Activated T-helper 1 cell treated with anti-CD3 and anti-CD28 coated beads, Interleukin-12 subunit alpha, Interleukin-12 subunit beta, Interleukin-2, Interleukin-4 antibody, amounts not matched to agents 30 ng/mL and 10 ng/mL and 1 ng/mL, durations not matched to agents 14 hours and 24 hours and 36 hours (primary cell): ENCODE measurements at regions of chr1 and their contacts with region 1.

Region 1: DNA sequence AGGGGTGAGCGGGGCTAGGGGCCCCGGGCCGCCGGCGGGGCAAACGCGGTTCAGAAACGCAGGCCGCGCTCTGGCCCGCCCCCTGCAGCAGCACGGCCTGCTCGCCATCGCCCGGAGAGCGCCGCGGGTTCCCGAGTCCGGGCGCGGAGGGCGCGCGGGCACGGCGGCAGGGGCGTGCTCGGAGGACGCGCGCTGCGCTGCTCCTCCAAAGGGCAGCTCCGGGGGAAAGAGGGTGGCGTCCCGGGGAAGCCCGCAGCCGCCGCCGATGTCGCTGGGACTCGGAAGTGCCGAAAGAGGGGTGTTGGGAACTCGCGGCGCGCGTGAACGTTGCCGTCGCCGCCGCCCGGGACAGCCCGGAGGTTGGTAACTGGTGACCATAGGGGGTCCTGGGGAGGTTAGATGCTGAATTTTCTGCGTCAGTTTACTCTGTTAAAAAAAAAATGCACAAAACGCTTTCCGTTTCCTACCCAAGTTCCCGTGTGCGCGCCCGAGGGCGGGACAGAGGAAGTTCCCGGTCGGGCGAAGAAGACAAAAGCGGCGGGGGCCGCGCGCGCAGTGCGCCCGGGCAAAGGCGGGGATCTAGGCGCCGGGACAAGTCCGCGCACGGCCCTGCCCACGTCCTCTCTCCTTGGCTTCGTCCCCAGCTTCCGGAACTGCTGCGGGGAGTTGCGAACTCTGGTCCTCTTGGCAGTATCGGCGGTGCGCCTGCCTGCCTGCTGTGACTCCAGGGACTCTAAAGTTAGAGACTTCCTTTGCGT is at the start of gene HHAT:
- DNase-seq: peak; percentile 52
- H3K4me3 Mint-ChIP-seq: peak within 1 kb of the TSS; percentile 90
- H3K27ac Mint-ChIP-seq: peak within 1 kb of the TSS; percentile 95
- H3K4me1 Mint-ChIP-seq: peaks cover 42% of the 10 kb centered on the region
- H3K27me3 Mint-ChIP-seq: peaks cover 12% of the 10 kb centered on the region
- total RNA-seq, gene HHAT: 0.67 and 0.73 TPM in 2 replicates

Region 2: GRCh38 chr1:209827384-209828262 is 501.3 kb before region 1 on chr1 and contains the start of gene UTP25:
- intact Hi-C with region 1: loop called (anchors 1 kb)
- DNase-seq: peak; percentile 89
- H3K4me3 Mint-ChIP-seq: peak within 1 kb of the TSS; percentile 93
- H3K27ac Mint-ChIP-seq: peak within 1 kb of the TSS; percentile 90
- H3K4me1 Mint-ChIP-seq: peaks cover 51% of the 10 kb centered on the region
- H3K27me3 Mint-ChIP-seq: peaks cover 9% of the 10 kb centered on the region
- total RNA-seq, gene UTP25: 17.7 and 18.3 TPM in 2 replicates

Region 3: GRCh38 chr1:210233216-210234020 is 95.5 kb before region 1 on chr1:
- intact Hi-C with region 1: loop called (anchors 5 kb)
- DNase-seq: no peak
- H3K4me3 Mint-ChIP-seq: peak overlapping the region; percentile 45
- H3K27ac Mint-ChIP-seq: no peak overlapping the region
- H3K4me1 Mint-ChIP-seq: peaks cover 6% of the 10 kb centered on the region
- H3K27me3 Mint-ChIP-seq: peaks cover 48% of the 10 kb centered on the region

Region 4: DNA sequence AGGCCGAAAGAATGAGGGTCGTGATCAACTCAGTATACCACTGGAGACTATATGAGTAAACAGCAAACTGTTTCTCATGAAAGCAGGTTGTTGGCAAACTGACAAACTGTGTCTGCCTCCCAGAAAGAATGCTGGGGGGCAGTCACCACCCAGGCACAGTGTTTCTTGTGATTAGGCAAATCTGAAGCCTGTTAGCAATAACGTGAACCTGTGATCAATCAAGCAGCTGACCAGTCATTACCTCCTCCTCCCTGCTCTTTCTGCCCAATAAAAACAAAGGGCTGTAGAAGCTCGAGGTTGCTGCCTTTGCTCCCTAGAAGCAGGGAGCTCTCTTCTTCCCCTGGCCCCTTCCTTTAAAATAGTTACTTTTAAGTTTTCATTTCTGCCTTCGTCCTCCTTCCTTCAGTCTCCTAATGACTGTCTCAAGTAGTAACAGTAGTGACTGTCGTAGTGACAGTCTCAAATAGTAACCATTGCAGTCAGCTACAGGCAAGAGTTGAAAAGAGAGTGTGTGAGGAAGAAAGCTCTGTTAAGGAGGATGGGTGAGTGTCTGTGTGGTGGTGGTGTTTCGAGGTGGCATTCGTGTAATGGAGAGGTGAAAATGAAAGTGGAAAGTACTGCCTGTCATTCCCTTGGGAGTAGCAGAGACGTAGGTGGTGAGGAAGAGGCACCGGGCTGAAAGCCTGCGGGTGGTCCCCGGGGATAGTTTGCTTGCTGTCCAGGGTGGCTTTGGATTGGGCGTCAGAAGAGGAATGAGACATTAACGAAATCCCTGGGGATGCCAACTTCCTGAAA is 14.3 kb after region 1 on chr1:
- intact Hi-C with region 1: loop called (anchors 1 kb)
- DNase-seq: no peak
- H3K4me3 Mint-ChIP-seq: no peak overlapping the region
- H3K27ac Mint-ChIP-seq: no peak overlapping the region
- H3K4me1 Mint-ChIP-seq: peaks cover 29% of the 10 kb centered on the region
- H3K27me3 Mint-ChIP-seq: peaks cover 9% of the 10 kb centered on the region

Region 5: GRCh38 chr1:210373885-210374599 is 45.1 kb after region 1 on chr1:
- intact Hi-C with region 1: loop called (anchors 1 kb)
- DNase-seq: peak; percentile 57
- H3K4me3 Mint-ChIP-seq: no peak overlapping the region
- H3K27ac Mint-ChIP-seq: peak overlapping the region; percentile 62
- H3K4me1 Mint-ChIP-seq: peaks cover 19% of the 10 kb centered on the region
- H3K27me3 Mint-ChIP-seq: peaks cover 5% of the 10 kb centered on the region